Sciatic nerve (tissue), 2 donors: ENCODE measurements at regions of chr5 and their contacts with region 1.

Region 1: GRCh38 chr5:30479696-30480095 is 713.8 kb upstream of the CDH6 start:
- DNase-seq: no peak
- ATAC-seq: no peak

Region 2: GRCh38 chr5:31717561-31717960 is 1237.9 kb after region 1 on chr5:
- intact Hi-C with region 1: loop called (anchors 5 kb)
- DNase-seq: no peak
- ATAC-seq: no peak